ENCODE measurements at regions of chr6 and their contacts with region 1.

Region 1: GRCh38 chr6:113489946-113490345 is 367.2 kb upstream of the MARCKS start:
- DNase-seq: no peak
- H3K4me3 ChIP-seq: no peak overlapping the region
- H3K27ac ChIP-seq: peak overlapping the region; percentile 23
- H3K4me1 ChIP-seq: peaks cover 59% of the 10 kb centered on the region
- H3K27me3 ChIP-seq: no peaks in the 10 kb centered on the region
- CTCF ChIP-seq: no peak

Region 2: DNA sequence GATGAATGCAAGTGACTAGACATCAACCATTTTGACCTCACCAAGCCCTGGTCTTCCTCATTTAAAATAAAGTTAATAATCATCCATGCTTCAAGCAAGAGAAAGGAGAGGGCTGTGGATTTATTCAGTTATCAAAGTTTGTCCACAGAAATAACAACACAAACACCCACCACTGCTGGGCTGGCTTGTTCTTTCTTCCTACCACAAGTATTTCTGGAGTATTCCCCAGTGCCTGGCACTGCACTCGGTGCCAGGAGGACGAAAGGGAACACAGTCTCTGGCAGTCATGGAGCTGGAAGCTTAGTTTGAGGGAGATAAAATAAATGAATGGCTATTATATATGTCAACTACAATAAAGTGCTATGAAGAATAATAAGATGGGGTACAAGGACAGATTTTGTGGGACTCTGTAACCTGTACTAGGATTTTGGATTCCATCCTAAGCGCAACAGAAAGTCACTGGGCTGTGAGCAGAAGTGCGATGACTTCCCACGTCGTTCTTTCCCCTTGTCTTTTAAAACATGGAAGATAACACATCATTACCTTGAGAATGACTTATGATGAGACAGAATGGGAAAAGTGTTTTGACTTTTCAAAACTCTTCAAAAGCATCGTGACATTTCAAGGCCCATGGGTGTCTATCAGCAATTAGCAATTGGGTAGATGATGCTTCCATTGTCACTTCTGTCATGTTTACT is 1809.8 kb before region 1 on chr6:
- CTCF ChIA-PET with region 1: no interaction called
- POLR2A ChIA-PET with region 1: no interaction called
- intact Hi-C with region 1: no loop called
- DNase-seq: no peak
- H3K4me3 ChIP-seq: no peak overlapping the region
- H3K27ac ChIP-seq: no peak overlapping the region
- H3K4me1 ChIP-seq: no peaks in the 10 kb centered on the region
- H3K27me3 ChIP-seq: no peaks in the 10 kb centered on the region
- CTCF ChIP-seq: no peak

Region 3: GRCh38 chr6:113596387-113597230 is 106.7 kb after region 1 on chr6:
- CTCF ChIA-PET with region 1: no interaction called
- POLR2A ChIA-PET with region 1: interaction called, 16 read pairs
- intact Hi-C with region 1: no loop called
- DNase-seq: peak; percentile 34 to 65
- H3K4me3 ChIP-seq: no peak overlapping the region
- H3K27ac ChIP-seq: 0 out of 2 replicates have a peak overlapping the region, but pooled peaks have one; percentile 3
- H3K4me1 ChIP-seq: no peaks in the 10 kb centered on the region; the same call in 1 of the 2 replicates
- H3K27me3 ChIP-seq: no peaks in the 10 kb centered on the region
- CTCF ChIP-seq: no peak

Region 4: DNA sequence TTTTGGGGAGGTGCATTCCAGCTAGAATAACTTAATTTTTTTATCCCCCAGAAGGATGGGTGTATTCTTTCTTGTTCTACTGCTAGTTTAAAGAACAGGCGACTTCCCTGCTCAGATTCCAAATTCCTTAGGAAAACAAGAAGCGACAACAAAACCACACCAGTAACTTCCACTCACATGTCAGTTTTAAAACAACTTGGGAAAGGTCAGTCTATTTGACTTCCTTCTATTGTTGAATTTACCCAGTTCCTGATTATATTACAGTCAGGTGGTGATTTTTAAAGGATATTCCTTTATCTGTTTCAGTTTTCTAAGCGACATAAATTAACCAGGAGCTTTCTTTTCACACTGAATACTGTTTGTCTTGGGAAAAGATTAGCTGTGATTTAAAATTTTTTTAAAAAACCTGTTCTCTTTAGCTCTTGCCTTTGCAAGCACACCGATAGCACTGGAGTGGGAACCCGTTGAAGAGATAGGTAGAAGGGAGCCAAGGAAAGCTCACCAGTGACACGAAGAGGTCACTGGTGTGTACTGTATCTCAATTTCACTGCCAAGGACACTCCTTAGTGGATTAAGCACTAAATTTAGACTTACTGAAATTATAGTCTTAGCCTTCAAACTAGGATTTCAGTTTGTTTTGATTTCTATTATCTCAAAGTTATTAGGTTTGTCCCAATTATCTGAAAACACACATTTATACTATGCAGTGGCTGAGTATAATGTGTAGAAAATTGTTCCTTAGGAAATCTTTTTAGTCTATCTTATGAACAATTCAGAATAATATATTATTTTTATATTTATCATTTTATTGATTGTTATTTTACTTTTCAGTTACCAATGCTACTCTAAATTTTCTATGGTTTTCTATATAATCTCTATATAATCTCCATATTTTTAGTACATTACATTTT is 389.5 kb after region 1 on chr6:
- CTCF ChIA-PET with region 1: no interaction called
- POLR2A ChIA-PET with region 1: no interaction called
- intact Hi-C with region 1: loop called (anchors 5 kb)
- DNase-seq: peak; percentile 54 to 77
- H3K4me3 ChIP-seq: no peak overlapping the region
- H3K27ac ChIP-seq: peak overlapping the region; percentile 49
- H3K4me1 ChIP-seq: peaks cover 10% of the 10 kb centered on the region
- H3K27me3 ChIP-seq: no peaks in the 10 kb centered on the region
- CTCF ChIP-seq: peak; percentile 85

Measured in PC-9 (cell line).